PC-9 (cell line): ENCODE measurements at regions of chr2 and their contacts with region 1.

Region 1: GRCh38 chr2:178700922-178701342 is 106.3 kb downstream of the TTN start:
- DNase-seq: no peak
- H3K4me3 ChIP-seq: no peak overlapping the region
- H3K27ac ChIP-seq: no peak overlapping the region
- H3K4me1 ChIP-seq: no peaks in the 10 kb centered on the region
- H3K27me3 ChIP-seq: no peaks in the 10 kb centered on the region
- CTCF ChIP-seq: peak; percentile 100

Region 2: DNA sequence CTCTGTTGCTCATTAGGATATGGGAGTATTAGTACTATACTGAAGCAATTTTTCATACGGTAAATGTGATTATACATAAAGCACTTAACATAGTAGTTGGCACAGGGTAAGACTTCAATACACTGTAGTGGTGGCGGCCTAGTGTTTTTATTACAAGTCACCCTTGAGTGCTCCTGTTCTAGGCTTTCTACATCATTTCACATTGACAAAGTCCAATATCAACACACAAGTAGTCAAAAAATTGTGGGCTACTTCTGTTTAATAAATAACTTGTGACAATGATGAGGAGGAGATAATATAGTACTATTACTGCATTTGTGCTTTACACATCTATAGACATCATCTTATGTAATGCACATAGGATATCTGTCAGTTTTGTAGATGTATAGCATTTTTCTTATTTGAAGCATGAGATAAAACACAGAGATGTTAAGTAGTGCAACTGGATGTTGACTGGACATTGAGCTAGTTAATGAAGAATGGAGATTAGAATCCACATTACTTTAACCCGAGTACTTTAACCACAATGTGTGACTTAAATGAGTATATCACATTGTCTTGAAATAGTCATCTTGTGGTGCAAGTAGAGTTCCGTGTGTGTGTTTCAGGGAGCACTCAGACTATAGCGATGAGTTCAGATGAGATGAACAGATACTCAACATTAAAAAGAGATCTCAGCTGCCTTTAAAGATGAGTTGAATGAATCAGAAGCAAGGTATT is 1025.7 kb after region 1 on chr2:
- CTCF ChIA-PET with region 1: interaction called, 10 read pairs
- POLR2A ChIA-PET with region 1: no interaction called
- intact Hi-C with region 1: no loop called
- DNase-seq: no peak
- H3K4me3 ChIP-seq: no peak overlapping the region
- H3K27ac ChIP-seq: no peak overlapping the region
- H3K4me1 ChIP-seq: no peaks in the 10 kb centered on the region
- H3K27me3 ChIP-seq: no peaks in the 10 kb centered on the region
- CTCF ChIP-seq: no peak

Region 3: DNA sequence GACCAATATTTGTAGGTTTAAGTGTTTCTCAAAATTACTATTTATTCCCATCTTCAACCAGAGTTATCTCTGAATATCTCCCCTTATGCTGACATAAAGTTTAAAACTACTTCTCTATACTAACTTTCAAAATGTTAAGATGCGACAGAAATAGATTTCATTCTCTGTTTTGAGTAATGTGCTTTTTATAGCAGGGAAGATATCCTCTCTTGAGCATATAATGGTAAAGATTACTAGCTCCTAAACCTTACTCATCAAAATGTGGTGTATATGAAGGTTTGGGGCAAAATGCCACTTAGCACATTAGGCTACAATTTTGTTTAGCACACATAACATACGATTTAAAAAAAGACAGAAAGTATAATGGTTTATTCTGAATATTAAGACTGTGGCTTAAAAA is 1251.7 kb after region 1 on chr2:
- CTCF ChIA-PET with region 1: interaction called, 17 read pairs
- POLR2A ChIA-PET with region 1: no interaction called
- intact Hi-C with region 1: no loop called
- DNase-seq: no peak
- H3K4me3 ChIP-seq: no peak overlapping the region
- H3K27ac ChIP-seq: no peak overlapping the region
- H3K4me1 ChIP-seq: peaks cover 12% of the 10 kb centered on the region; the same call in 1 of the 2 replicates
- H3K27me3 ChIP-seq: no peaks in the 10 kb centered on the region
- CTCF ChIP-seq: no peak